ENCODE measurements at regions of chr17 and their contacts with region 1.

Region 1: GRCh38 chr17:8162233-8162996 is at the start of gene VAMP2:
- DNase-seq: no peak
- H3K4me3 ChIP-seq: peak within 1 kb of the TSS; percentile 88 to 98 (median 93)
- H3K27ac ChIP-seq: peak within 1 kb of the TSS; percentile 99
- H3K4me1 ChIP-seq: peaks cover 4 to 25% (median 21%) of the 10 kb centered on the region in 4 experiments
- H3K27me3 ChIP-seq: no peaks in the 10 kb centered on the region
- CTCF ChIP-seq: no peak
- EP300 ChIP-seq: 0 out of 3 replicates have a peak, but pooled peaks of 1 of the 2 experiments have one; percentile 40
- POLR2A ChIP-seq: peak; percentile 18 to 70; a peak in 2 of 3 replicates
- RAD21 ChIP-seq: no peak
- total RNA-seq, gene VAMP2: 19.0 and 20.5 TPM in 2 replicates

Region 2: DNA sequence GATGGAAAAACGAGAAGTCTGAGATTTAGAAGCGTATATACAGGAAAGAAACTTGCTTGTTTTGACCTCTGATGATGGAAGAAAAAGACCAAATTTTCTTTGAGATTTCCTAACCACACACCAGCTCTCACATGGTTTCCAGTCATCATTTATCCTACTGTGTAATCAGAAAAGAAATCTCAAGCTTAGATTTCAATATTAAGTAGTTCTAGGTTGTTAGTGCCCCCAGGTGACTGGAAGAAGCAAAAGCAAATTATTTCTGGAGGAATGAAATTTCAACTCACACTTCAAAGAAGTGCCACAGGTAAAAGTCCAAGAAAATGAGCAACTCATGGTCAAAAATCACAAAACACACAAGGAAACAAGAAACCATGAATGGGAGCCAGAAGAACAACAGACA is 380.2 kb before region 1 on chr17:
- CTCF ChIA-PET with region 1: no interaction called
- POLR2A ChIA-PET with region 1: no interaction called
- DNase-seq: no peak
- H3K4me3 ChIP-seq: no peak overlapping the region
- H3K27ac ChIP-seq: no peak overlapping the region
- H3K4me1 ChIP-seq: no peaks in the 10 kb centered on the region
- H3K27me3 ChIP-seq: no peaks in the 10 kb centered on the region; a peak in 2 of 7 replicates
- CTCF ChIP-seq: no peak
- EP300 ChIP-seq: no peak
- POLR2A ChIP-seq: no peak
- RAD21 ChIP-seq: no peak

Region 3: GRCh38 chr17:8151123-8151640 is 11.2 kb before region 1 on chr17:
- CTCF ChIA-PET with region 1: interaction called, 133 read pairs
- POLR2A ChIA-PET with region 1: interaction called, 23 read pairs
- DNase-seq: peak in 1 of 2 experiments; percentile 81
- H3K4me3 ChIP-seq: peak overlapping the region; percentile 79 to 93 (median 84)
- H3K27ac ChIP-seq: no peak overlapping the region
- H3K4me1 ChIP-seq: peaks cover 12 to 31% (median 19%) of the 10 kb centered on the region in 4 experiments
- H3K27me3 ChIP-seq: no peaks in the 10 kb centered on the region
- CTCF ChIP-seq: no peak
- EP300 ChIP-seq: no peak
- POLR2A ChIP-seq: no peak
- RAD21 ChIP-seq: no peak

Measured in H1 (cell line).